ENCODE measurements at regions of chr10 and their contacts with region 1.

Region 1: GRCh38 chr10:69392481-69393000 is 24.2 kb downstream of the TACR2 start:
- DNase-seq: peak; percentile 80 to 91
- H3K4me3 ChIP-seq: no peak overlapping the region
- H3K27ac ChIP-seq: no peak overlapping the region; the same call in 1 of the 2 replicates
- H3K4me1 ChIP-seq: peaks cover 8 to 21% (median 15%) of the 10 kb centered on the region in 4 experiments
- H3K27me3 ChIP-seq: no peaks in the 10 kb centered on the region
- CTCF ChIP-seq: peak; percentile 89 to 99 (median 99)
- EP300 ChIP-seq: no peak
- POLR2A ChIP-seq: no peak; a peak in 2 of 3 replicates
- RAD21 ChIP-seq: peak; percentile 99

Region 2: GRCh38 chr10:69375307-69376151 is 17.0 kb before region 1 on chr10:
- CTCF ChIA-PET with region 1: interaction called, 42 read pairs
- POLR2A ChIA-PET with region 1: interaction called, 3 read pairs
- DNase-seq: peak; percentile 39 to 77
- H3K4me3 ChIP-seq: 0 out of 8 replicates have a peak overlapping the region, but pooled peaks of 1 of the 4 experiments have one; percentile 11
- H3K27ac ChIP-seq: peak overlapping the region; percentile 51; the same call in 1 of the 2 replicates
- H3K4me1 ChIP-seq: peaks cover 0 to 20% (median 12%) of the 10 kb centered on the region in 4 experiments; a peak in 6 of 7 replicates
- H3K27me3 ChIP-seq: no peaks in the 10 kb centered on the region
- CTCF ChIP-seq: no peak
- EP300 ChIP-seq: no peak
- POLR2A ChIP-seq: peak in 1 of 2 experiments; percentile 28; a peak in 1 of 3 replicates
- RAD21 ChIP-seq: no peak; a peak in 1 of 4 replicates

Region 3: DNA sequence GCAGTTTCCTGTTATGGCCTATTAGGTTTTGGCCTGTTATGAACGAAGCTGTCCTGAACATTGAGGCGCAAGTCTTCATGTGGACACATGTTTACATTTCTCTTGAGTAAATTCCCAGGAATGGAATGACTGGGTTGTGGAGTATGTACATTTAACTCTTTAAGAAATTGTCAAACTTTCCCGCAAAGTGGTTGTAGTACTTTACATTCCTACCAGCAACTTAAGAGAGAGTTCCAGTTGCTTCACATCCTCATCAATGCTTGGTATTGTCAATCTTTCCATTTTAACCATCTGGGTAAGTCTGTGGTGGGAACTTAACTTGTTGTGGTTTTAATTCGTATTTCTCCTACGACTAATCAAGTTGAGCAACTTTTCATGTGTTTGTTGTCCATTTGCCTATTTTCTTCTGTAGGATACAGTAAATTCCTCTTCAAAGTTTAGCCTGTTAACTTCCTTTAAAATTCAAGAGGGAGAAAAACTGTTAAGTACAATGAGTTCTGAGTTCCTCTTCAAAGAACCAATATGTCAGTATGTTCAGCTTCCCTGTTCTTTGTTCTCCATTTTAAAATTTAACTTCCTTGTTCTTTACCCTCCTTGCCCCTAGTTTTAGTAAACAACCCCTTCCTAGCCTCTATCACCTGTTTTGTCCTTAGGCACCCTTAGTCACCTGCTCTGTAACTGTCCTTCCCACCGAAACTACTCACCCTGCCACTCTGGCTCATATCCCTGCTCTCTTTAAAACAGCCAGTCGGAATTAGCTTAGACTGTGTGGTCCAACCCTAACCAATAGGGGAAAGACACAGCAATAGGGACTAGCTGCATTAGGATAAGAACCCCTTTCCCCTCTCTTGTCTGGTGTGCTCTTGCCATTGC is 311.5 kb after region 1 on chr10:
- CTCF ChIA-PET with region 1: no interaction called
- POLR2A ChIA-PET with region 1: no interaction called
- DNase-seq: no peak
- H3K4me3 ChIP-seq: no peak overlapping the region
- H3K27ac ChIP-seq: no peak overlapping the region
- H3K4me1 ChIP-seq: no peaks in the 10 kb centered on the region
- H3K27me3 ChIP-seq: no peaks in the 10 kb centered on the region
- CTCF ChIP-seq: no peak
- EP300 ChIP-seq: no peak
- POLR2A ChIP-seq: no peak
- RAD21 ChIP-seq: no peak